ENCODE measurements at regions of chr18 and their contacts with region 1.

Region 1: DNA sequence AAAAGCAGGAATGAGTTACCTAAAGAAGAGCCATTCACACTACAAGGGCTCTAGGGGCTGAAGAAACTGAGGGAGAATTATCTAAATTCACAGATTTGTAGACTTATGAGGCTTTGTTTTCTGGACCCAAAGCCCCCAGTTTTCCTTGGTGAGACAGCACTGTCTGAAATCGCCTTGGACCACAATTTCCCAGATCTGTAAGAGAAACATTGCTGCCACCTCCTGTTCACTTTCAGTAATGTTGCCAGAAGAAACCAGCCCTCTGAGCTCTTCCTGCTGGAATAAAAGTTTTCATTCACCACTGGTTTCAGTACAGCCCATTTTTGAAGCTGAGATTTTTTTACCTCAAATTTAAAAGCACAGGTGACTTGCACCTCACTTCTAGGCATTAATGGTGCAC is 169.2 kb downstream of the CDH20 start:
- DNase-seq: peak; percentile 28
- ATAC-seq: no peak
- H3K4me3 ChIP-seq: no peak overlapping the region
- H3K27ac ChIP-seq: no peak overlapping the region
- H3K4me1 ChIP-seq: no peaks in the 10 kb centered on the region
- H3K27me3 ChIP-seq: no peaks in the 10 kb centered on the region
- CTCF ChIP-seq: peak; percentile 57

Region 2: DNA sequence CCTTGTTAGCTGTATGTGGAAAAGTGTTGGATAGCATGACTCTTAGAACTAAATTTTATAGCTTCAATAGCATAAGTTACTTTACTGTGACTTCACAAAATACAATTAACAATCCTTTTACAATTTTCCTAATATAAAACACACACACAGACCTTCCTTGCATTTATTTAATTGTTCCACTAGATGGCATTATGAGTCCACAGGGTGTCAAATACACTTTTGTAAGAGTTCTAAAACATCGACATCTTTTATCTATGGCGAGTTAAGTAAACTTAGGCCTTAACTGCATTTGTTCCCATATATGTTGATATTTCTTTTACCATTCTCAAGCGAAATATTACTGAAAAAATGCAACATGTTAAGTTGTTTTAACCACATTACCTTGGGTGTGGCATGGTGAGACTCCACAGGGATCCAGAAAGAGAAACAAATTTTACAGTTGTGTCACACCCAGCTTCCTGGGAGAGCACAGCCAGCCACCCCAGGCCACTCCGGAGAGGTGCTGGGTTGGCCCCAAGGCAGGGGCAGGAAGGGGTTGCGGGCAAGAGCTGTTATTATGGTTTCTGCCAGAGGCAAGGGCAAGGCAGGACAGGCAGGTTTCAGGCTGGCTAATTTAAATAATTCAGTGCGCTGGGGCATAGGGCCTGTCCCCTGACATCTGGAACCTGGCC is 817.5 kb before region 1 on chr18:
- CTCF ChIA-PET with region 1: interaction called, 3 read pairs
- POLR2A ChIA-PET with region 1: no interaction called
- in situ Hi-C with region 1: no loop called
- intact Hi-C with region 1: loop called (anchors 5 kb)
- DNase-seq: peak; percentile 15
- ATAC-seq: no peak
- H3K4me3 ChIP-seq: no peak overlapping the region
- H3K27ac ChIP-seq: no peak overlapping the region
- H3K4me1 ChIP-seq: no peaks in the 10 kb centered on the region
- H3K27me3 ChIP-seq: no peaks in the 10 kb centered on the region
- CTCF ChIP-seq: peak; percentile 54; the same call in 1 of the 2 replicates

Region 3: DNA sequence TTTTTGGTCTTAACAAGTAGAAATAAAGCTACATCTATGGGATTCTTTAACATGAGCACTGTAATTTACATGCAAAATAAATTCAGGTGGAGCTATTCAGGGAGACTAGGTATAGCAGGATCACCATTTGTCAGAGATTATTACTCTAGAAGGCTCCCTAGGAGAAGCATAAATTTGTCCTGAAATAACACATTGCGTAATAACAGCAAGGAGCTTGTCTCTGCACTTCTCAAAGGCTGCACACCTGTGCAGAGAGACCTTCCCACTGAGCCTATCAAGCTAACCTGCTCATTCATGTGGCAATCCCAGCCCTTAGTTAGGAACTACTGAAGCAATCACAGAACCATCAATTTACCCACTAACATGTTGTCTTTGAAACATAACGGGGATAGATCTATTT is 692.5 kb before region 1 on chr18:
- CTCF ChIA-PET with region 1: interaction called, 3 read pairs
- POLR2A ChIA-PET with region 1: no interaction called
- in situ Hi-C with region 1: no loop called
- intact Hi-C with region 1: loop called (anchors 10 kb)
- DNase-seq: no peak
- ATAC-seq: no peak
- H3K4me3 ChIP-seq: no peak overlapping the region
- H3K27ac ChIP-seq: no peak overlapping the region
- H3K4me1 ChIP-seq: no peaks in the 10 kb centered on the region
- H3K27me3 ChIP-seq: no peaks in the 10 kb centered on the region
- CTCF ChIP-seq: no peak

Region 4: GRCh38 chr18:61322265-61322873 is 180.1 kb before region 1 on chr18:
- CTCF ChIA-PET with region 1: no interaction called
- POLR2A ChIA-PET with region 1: no interaction called
- in situ Hi-C with region 1: no loop called
- intact Hi-C with region 1: loop called (anchors 5 kb)
- DNase-seq: peak; percentile 24
- ATAC-seq: peak; percentile 77; the same call in 1 of the 2 replicates
- H3K4me3 ChIP-seq: no peak overlapping the region
- H3K27ac ChIP-seq: no peak overlapping the region
- H3K4me1 ChIP-seq: no peaks in the 10 kb centered on the region
- H3K27me3 ChIP-seq: no peaks in the 10 kb centered on the region
- CTCF ChIP-seq: peak; percentile 60

Region 5: GRCh38 chr18:61435064-61435652 is 67.3 kb before region 1 on chr18:
- CTCF ChIA-PET with region 1: no interaction called
- POLR2A ChIA-PET with region 1: no interaction called
- in situ Hi-C with region 1: no loop called
- intact Hi-C with region 1: no loop called
- DNase-seq: no peak
- ATAC-seq: no peak
- H3K4me3 ChIP-seq: no peak overlapping the region
- H3K27ac ChIP-seq: no peak overlapping the region
- H3K4me1 ChIP-seq: no peaks in the 10 kb centered on the region
- H3K27me3 ChIP-seq: no peaks in the 10 kb centered on the region
- CTCF ChIP-seq: peak; percentile 20; the same call in 1 of the 2 replicates

Region 6: GRCh38 chr18:62852851-62853250 is 1350.4 kb after region 1 on chr18:
- CTCF ChIA-PET with region 1: no interaction called
- POLR2A ChIA-PET with region 1: no interaction called
- in situ Hi-C with region 1: no loop called
- intact Hi-C with region 1: no loop called
- DNase-seq: no peak
- ATAC-seq: no peak
- H3K4me3 ChIP-seq: no peak overlapping the region
- H3K27ac ChIP-seq: no peak overlapping the region
- H3K4me1 ChIP-seq: no peaks in the 10 kb centered on the region
- H3K27me3 ChIP-seq: no peaks in the 10 kb centered on the region
- CTCF ChIP-seq: no peak

Measured in Panc1 (cell line).